ENCODE measurements at regions of chrX and their contacts with region 1.

Region 1: GRCh38 chrX:20362268-20363267 is 95.9 kb upstream of the RPS6KA3 start:
- DNase-seq: no peak
- H3K4me3 ChIP-seq: no peak overlapping the region
- H3K27ac ChIP-seq: peak overlapping the region; percentile 78
- H3K27me3 ChIP-seq: no peaks in the 10 kb centered on the region
- CTCF ChIP-seq: no peak

Region 2: GRCh38 chrX:20159797-20160385 is 202.7 kb before region 1 on chrX:
- CTCF ChIA-PET with region 1: no interaction called
- POLR2A ChIA-PET with region 1: no interaction called
- DNase-seq: no peak
- H3K4me3 ChIP-seq: no peak overlapping the region
- H3K27ac ChIP-seq: no peak overlapping the region
- H3K27me3 ChIP-seq: no peaks in the 10 kb centered on the region
- CTCF ChIP-seq: no peak

Region 3: DNA sequence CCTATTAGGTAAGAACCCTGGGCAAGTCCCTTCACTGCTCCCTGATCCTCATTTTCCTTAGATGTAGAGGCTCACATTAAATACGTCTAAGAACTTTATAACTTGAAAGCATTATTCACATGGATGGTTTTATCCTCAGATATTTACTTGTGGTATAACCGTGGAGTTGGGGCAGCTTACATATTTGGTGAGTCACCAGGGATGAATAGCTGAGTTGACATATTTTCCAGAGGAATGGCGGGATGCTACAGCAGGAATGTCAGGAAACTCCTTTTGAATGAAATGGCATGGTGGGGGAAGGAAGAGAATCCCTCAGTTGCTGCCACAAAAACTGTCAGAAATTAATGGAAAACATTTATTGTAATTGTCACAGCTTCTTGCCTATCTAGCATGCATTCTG is 69.5 kb after region 1 on chrX:
- CTCF ChIA-PET with region 1: no interaction called
- POLR2A ChIA-PET with region 1: interaction called, 14 read pairs
- DNase-seq: no peak
- H3K4me3 ChIP-seq: no peak overlapping the region
- H3K27ac ChIP-seq: no peak overlapping the region
- H3K27me3 ChIP-seq: no peaks in the 10 kb centered on the region
- CTCF ChIP-seq: no peak